ENCODE measurements at regions of chr3 and their contacts with region 1.

Region 1: GRCh38 chr3:113736548-113737089 is 9.4 kb downstream of the NAA50 start:
- DNase-seq: peak; percentile 53
- ATAC-seq: peak; percentile 81
- H3K4me3 Mint-ChIP-seq: no peak overlapping the region
- H3K27ac Mint-ChIP-seq: peak overlapping the region; percentile 17
- H3K4me1 Mint-ChIP-seq: peaks cover 45% of the 10 kb centered on the region
- H3K27me3 Mint-ChIP-seq: no peaks in the 10 kb centered on the region

Region 2: GRCh38 chr3:113600418-113601182 is 136.0 kb before region 1 on chr3:
- CTCF ChIA-PET with region 1: no interaction called
- POLR2A ChIA-PET with region 1: no interaction called
- DNase-seq: no peak
- ATAC-seq: no peak
- H3K4me3 Mint-ChIP-seq: no peak overlapping the region
- H3K27ac Mint-ChIP-seq: no peak overlapping the region
- H3K4me1 Mint-ChIP-seq: peaks cover 6% of the 10 kb centered on the region
- H3K27me3 Mint-ChIP-seq: no peaks in the 10 kb centered on the region

Region 3: DNA sequence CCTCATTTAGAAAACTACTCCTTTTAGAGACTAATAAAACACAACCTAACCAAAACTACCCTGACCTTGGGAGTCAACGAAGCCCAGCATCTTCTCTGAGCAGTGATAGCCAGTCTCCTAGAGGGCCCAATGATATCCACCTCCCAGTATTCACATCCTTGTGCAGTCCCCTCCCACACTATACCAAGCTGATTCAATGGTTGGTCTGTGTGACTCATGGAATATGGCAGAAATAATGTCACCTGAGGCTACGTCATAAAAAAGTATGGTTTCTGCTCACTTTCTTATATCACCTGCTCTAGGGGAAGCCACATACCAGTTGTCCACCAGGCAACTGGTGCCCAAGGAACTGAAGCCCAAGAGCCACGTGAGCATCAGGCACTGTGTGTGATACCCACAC is 18.8 kb before region 1 on chr3:
- CTCF ChIA-PET with region 1: interaction called, 34 read pairs
- POLR2A ChIA-PET with region 1: no interaction called
- DNase-seq: no peak
- ATAC-seq: no peak
- H3K4me3 Mint-ChIP-seq: no peak overlapping the region
- H3K27ac Mint-ChIP-seq: no peak overlapping the region
- H3K4me1 Mint-ChIP-seq: peaks cover 15% of the 10 kb centered on the region
- H3K27me3 Mint-ChIP-seq: no peaks in the 10 kb centered on the region

Region 4: DNA sequence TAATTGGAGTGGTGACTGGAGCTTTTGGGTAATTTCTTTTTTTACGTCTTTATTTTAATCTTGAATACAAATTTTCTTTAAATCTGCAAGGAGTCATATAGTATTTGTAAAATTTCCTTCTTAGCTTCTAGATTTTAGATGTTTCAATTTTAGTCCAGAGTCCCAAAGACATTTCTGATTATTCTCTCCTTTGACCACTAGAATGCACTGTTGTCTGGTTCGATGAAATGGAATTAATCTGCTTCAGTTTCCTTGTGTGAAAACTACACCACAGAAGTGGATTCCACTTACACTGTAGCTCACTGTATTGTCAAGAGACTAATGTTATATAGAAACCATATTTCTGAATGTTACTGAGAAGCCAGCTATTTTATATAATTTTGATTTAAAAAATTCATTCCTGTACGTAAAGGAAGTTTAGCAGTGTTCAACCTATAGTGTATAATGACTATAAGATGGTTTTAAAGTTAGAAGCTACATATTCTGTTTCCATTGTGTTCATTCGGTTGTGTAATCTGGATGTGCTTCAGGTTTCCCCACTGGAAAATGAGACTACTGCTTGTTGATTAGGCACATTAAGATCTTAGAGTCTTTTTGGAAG is 108.1 kb after region 1 on chr3:
- CTCF ChIA-PET with region 1: interaction called, 14 read pairs
- POLR2A ChIA-PET with region 1: no interaction called
- DNase-seq: no peak
- ATAC-seq: peak; percentile 57
- H3K4me3 Mint-ChIP-seq: no peak overlapping the region
- H3K27ac Mint-ChIP-seq: no peak overlapping the region
- H3K4me1 Mint-ChIP-seq: no peaks in the 10 kb centered on the region
- H3K27me3 Mint-ChIP-seq: no peaks in the 10 kb centered on the region

Measured in activated CD8-positive, alpha-beta T cell treated with anti-CD3 and anti-CD28 coated beads, Interleukin-2, amount 10 ng/mL, durations not matched to agents 7 days and 5 days (primary cell).